CD4-positive, alpha-beta T cell (primary cell): ENCODE measurements at regions of chr2 and their contacts with region 1.

Region 1: DNA sequence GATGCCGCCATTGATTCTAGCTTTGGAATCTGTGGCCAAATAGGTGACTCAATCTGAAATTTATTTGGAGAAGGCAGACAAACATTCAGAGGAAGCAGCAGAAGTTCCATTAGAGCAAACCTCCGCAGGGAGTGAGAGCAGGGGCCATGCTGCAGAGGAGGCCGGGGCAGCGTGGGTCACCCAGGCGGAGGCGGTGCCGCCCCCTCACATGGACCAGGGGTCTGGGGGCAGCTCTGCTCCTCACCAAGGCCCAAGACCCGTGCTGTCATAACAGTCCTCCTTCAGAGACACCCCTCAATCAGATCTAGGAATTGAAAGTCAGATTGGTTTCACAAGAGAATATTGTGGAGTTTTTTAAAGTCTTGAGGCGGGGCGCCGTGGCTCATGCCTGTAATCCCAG is 92.4 kb downstream of the GBX2 start:
- DNase-seq: no peak
- ATAC-seq: no peak
- H3K4me3 ChIP-seq: no peak overlapping the region
- H3K4me3 Mint-ChIP-seq: no peak overlapping the region
- H3K27ac ChIP-seq: no peak overlapping the region
- H3K27ac Mint-ChIP-seq: no peak overlapping the region
- H3K4me1 ChIP-seq: no peaks in the 10 kb centered on the region
- H3K4me1 Mint-ChIP-seq: no peaks in the 10 kb centered on the region
- H3K27me3 ChIP-seq: no peaks in the 10 kb centered on the region
- H3K27me3 Mint-ChIP-seq: no peaks in the 10 kb centered on the region
- CTCF ChIP-seq: no peak

Region 2: DNA sequence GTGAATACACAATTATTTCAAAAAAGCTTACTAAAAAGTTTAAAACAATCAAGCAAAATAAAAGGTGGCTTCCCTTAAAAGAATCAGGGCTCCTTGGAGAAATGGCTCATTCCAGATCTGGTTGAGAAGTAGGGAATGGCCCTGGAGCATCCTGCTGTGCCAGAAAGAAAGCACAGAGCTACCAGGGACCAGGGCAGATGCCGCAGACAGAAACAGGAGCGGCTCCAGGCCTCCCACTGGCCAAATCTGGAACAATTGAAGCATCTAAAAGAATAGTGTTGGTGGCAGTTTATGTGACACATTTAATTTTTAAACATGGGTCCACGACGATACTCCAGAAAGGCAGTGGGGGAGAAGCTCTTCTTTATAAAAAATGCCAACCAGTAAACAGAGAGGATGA is 16.9 kb after region 1 on chr2:
- CTCF ChIA-PET with region 1: no interaction called
- POLR2A ChIA-PET with region 1: no interaction called
- intact Hi-C with region 1: loop called in 1 of 2 experiments (anchors 2 kb)
- DNase-seq: no peak
- ATAC-seq: no peak
- H3K4me3 ChIP-seq: no peak overlapping the region
- H3K4me3 Mint-ChIP-seq: no peak overlapping the region
- H3K27ac ChIP-seq: no peak overlapping the region
- H3K27ac Mint-ChIP-seq: no peak overlapping the region
- H3K4me1 ChIP-seq: no peaks in the 10 kb centered on the region
- H3K4me1 Mint-ChIP-seq: no peaks in the 10 kb centered on the region
- H3K27me3 ChIP-seq: no peaks in the 10 kb centered on the region
- H3K27me3 Mint-ChIP-seq: peaks cover 5% of the 10 kb centered on the region
- CTCF ChIP-seq: no peak

Region 3: DNA sequence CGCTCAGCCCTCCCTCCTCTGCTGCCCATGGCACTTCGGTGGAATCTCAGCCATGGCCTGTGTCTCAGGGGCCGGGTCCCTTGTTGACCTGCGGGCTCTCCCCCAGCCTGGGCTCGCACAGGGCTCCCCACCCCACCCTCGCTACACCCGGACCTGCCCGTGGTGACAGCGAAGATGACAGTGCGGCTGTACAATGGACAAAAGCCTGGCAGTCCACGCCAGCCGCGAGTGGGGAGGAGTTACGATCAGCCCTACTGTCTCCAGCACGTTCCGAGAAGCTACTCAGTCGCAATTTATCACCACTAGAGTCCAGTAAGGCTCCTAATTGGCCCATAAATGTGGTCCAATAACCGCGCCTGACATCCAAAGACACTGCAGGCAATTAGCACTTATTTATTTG is 60.7 kb after region 1 on chr2:
- CTCF ChIA-PET with region 1: no interaction called
- POLR2A ChIA-PET with region 1: no interaction called
- intact Hi-C with region 1: no loop called
- DNase-seq: no peak
- ATAC-seq: no peak
- H3K4me3 ChIP-seq: no peak overlapping the region
- H3K4me3 Mint-ChIP-seq: no peak overlapping the region
- H3K27ac ChIP-seq: no peak overlapping the region
- H3K27ac Mint-ChIP-seq: no peak overlapping the region
- H3K4me1 ChIP-seq: no peaks in the 10 kb centered on the region
- H3K4me1 Mint-ChIP-seq: no peaks in the 10 kb centered on the region
- H3K27me3 ChIP-seq: peaks cover 0 to 5% of the 10 kb centered on the region in 2 experiments
- H3K27me3 Mint-ChIP-seq: peaks cover 20% of the 10 kb centered on the region
- CTCF ChIP-seq: no peak